Heart left ventricle (tissue), 16 donors: ENCODE measurements at regions of chr2 and their contacts with region 1.

Region 1: DNA sequence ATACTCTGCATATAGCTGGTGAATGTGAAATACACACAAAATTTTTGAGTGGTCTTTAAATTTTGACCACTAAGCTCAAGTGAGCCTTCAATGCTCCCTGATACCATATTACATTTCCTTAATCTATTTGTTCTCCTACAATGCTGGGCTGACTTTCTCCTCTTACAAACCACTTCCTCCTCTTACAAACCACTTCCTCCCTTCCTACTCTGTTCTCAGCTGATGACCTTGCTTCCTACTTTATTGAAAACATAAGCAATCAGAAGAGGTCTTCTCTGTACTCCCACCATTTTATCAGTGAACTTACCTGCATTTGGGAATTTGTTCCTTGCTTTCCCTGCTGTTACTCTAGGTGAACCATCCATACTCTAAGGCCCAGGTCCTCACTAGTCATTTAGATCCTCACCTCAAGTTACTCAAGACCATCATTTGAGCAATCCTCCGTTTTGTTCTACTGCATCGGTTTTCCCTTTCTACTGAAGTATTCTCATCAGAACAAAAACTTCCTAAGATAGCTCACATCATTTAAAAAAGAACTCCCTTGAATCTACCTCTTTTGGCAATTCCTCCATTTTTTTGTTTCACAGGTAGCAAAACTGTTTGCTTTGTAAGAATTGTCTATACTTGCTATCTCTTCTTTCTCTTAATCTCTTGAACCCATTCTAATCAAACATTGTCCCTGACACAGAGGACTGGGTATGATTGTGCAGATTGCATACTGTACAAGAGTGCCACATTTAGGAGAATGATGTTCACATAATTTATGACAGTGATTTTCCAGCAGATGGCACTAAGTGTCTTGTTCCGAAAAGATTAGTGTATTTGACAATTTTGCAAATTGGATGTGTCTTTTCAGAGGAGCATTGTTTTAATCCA is 96.5 kb downstream of the EPB41L5 start:
- DNase-seq: no peak
- ATAC-seq: peak; percentile 5 to 65 (median 48)
- H3K4me3 ChIP-seq: no peak overlapping the region
- H3K27ac ChIP-seq: no peak overlapping the region
- H3K4me1 ChIP-seq: peaks cover 3 to 29% (median 19%) of the 10 kb centered on the region in 12 donors
- H3K27me3 ChIP-seq: no peaks in the 10 kb centered on the region
- CTCF ChIP-seq: peak in 11 of 12 donors; percentile 20 to 58 (median 50)
- POLR2A ChIP-seq: no peak

Region 2: GRCh38 chr2:120012771-120013596 is 96.4 kb before region 1 on chr2 and contains the start of gene EPB41L5:
- intact Hi-C with region 1: loop called in 1 of 10 experiments (anchors 5 kb)
- DNase-seq: peak; percentile 92 to 96 (median 95)
- ATAC-seq: peak; percentile 97 to 99 (median 99)
- H3K4me3 ChIP-seq: peak within 1 kb of the TSS; percentile 73 to 100 (median 94)
- H3K27ac ChIP-seq: peak within 1 kb of the TSS; percentile 64 to 95 (median 84)
- H3K4me1 ChIP-seq: peaks cover 0 to 25% (median 14%) of the 10 kb centered on the region in 12 donors
- H3K27me3 ChIP-seq: no peaks in the 10 kb centered on the region
- CTCF ChIP-seq: peak in 2 of 12 donors; percentile 15 to 20
- POLR2A ChIP-seq: peak; percentile 49 to 84
- total RNA-seq, gene EPB41L5: 7.6 to 16.9 (median 11.2) TPM

Region 3: GRCh38 chr2:120091436-120091835 is 18.0 kb before region 1 on chr2:
- intact Hi-C with region 1: no loop called
- DNase-seq: no peak
- ATAC-seq: no peak
- H3K4me3 ChIP-seq: no peak overlapping the region
- H3K27ac ChIP-seq: no peak overlapping the region
- H3K4me1 ChIP-seq: no peaks in the 10 kb centered on the region
- H3K27me3 ChIP-seq: no peaks in the 10 kb centered on the region
- CTCF ChIP-seq: no peak
- POLR2A ChIP-seq: no peak

Region 4: DNA sequence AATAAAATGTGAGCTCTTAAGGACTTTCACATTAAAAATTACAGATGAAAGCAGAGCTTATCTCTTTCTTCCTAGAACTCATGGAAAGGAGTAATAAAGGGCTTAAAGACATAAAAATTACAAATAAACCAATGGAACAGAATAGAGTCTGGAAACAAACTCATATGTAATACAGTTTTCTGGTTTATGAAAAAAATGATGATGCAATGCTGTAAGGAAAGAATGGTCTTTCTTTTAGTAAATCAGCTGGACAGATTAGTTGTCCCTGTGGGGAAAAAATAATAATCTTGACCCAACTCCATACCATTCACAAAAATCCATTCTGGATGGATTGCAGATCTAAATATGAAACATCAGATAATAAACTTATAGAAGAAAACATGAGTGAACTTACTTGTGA is 59.6 kb after region 1 on chr2:
- intact Hi-C with region 1: loop called in 3 of 10 experiments (anchors 2 to 5 kb)
- DNase-seq: no peak
- ATAC-seq: no peak
- H3K4me3 ChIP-seq: no peak overlapping the region
- H3K27ac ChIP-seq: no peak overlapping the region
- H3K4me1 ChIP-seq: no peaks in the 10 kb centered on the region
- H3K27me3 ChIP-seq: no peaks in the 10 kb centered on the region
- CTCF ChIP-seq: no peak
- POLR2A ChIP-seq: no peak